ENCODE measurements at regions of chr7 and their contacts with region 1.

Region 1: GRCh38 chr7:75611548-75612178 is 119.5 kb downstream of the SPDYE5 start:
- DNase-seq: peak; percentile 86 to 97 (median 94)
- H3K4me3 ChIP-seq: peak overlapping the region in 53 of 59 donors; percentile 2 to 66 (median 38)
- H3K27ac ChIP-seq: peak overlapping the region; percentile 76 to 99 (median 93)
- H3K27me3 ChIP-seq: no peaks in the 10 kb centered on the region
- CTCF ChIP-seq: peak in 30 of 56 donors; percentile 5 to 55 (median 27)

Region 2: DNA sequence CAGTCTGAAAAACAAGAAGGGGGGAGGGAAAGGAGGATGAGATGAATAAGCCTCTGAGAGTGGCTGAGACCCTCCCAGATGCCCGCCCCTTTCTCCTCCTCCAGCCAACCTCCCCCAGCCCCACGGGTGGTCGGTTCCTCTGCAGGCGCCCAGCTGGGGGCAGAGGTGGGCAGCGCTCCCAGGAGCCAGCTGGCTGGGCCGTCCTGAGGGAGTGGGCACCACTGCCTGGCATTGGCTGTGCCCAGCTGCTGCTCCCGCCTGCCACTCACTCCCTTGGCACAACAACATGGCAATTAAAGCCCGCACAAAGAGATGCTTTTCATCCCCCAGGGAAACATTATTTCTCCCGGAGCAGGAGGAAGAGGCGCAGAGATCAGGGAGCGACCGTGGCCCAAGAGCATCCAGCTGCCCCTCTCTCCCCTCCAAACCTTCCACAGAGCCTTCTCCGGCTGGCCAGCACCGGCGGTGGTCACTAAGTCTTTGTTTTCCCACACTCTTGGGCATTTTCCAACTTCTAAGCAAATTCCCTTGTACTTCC is 12.3 kb before region 1 on chr7:
- intact Hi-C with region 1: loop called (anchors 1 kb)
- DNase-seq: peak; percentile 48 to 96 (median 94)
- H3K4me3 ChIP-seq: peak overlapping the region in 35 of 59 donors; percentile 3 to 53 (median 23)
- H3K27ac ChIP-seq: peak overlapping the region; percentile 72 to 98 (median 95)
- H3K27me3 ChIP-seq: no peaks in the 10 kb centered on the region
- CTCF ChIP-seq: peak in 27 of 56 donors; percentile 7 to 48 (median 23)

Region 3: DNA sequence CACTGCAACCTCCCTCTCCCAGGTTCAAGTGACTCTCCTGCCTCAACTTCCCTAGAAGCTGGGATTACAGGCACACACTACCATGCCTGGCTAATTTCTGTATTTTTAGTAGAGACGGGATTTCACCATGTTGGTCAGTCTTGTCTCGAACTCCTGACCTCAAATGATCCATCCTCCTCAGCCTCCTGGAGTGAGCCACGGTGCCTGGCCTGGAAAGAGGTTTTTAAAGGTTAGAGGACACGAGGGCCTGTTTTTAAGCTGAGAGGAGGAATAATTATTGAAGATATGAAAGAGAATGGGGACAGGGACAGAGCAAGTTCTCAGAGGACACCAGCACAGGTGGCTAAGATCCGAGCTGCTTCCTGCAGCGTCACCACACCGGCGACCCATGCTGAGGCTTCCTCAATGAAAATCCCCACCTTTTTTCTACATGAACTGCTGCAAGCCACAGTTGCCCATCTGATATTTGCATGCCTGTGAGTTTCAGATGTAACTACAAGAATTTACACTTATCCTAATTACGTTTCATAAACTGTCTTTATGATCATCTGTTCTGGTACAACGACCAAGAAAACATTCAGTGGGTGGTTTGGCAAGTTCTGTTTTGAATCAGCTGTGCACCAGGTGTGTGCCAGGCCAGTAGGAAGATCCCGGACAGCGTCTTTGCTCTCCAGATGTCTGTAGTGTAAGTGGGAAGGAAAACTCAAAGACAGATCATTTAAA is 51.1 kb after region 1 on chr7:
- intact Hi-C with region 1: loop called in 1 of 2 experiments (anchors 5 kb)
- DNase-seq: no peak
- H3K4me3 ChIP-seq: no peak overlapping the region
- H3K27ac ChIP-seq: peak overlapping the region in 58 of 59 donors; percentile 14 to 97 (median 89)
- H3K27me3 ChIP-seq: no peaks in the 10 kb centered on the region
- CTCF ChIP-seq: no peak

Region 4: GRCh38 chr7:75688200-75689136 is 76.8 kb after region 1 on chr7:
- intact Hi-C with region 1: loop called in 1 of 2 experiments (anchors 2 kb)
- DNase-seq: peak; percentile 33 to 96 (median 92)
- H3K4me3 ChIP-seq: peak overlapping the region in 54 of 59 donors; percentile 9 to 63 (median 36)
- H3K27ac ChIP-seq: peak overlapping the region; percentile 60 to 99 (median 93)
- H3K27me3 ChIP-seq: no peaks in the 10 kb centered on the region
- CTCF ChIP-seq: peak in 12 of 56 donors; percentile 7 to 33 (median 14)

Region 5: DNA sequence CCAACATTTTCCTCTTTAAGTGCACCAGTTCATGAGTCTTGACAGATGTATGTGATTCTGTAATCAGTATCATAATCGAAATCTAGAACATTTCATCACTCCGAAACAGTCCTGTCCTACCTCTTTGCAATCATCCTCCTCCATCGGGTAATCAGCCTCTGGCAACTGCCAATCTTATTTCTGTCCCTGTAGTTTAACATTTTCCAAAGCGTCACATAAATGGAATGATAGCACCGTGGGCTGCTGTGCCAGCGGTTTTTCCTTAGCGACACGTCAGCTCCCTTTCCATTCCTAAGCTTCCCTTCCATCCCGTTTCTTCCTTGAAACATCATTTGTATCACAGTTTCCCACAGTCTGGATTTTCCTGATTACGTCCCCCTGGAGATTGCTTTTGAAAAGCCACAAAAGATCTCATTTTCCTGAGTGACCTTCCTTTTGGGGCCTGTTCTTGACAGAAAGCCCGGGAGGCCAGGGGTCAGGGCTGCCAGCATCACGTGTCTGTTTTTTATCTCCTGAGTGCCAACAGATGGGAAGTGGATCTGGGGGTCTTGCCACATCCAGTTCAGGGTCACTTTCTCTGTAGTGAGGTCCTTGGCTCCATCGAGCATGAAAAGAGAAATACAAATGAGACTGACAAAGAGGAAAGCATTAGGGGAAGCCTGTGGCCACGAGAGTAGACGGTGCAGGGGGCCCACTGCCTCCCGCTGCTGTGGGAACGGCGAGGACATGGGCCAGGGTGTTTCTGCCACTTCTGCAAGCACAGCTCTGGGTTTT is 351.1 kb after region 1 on chr7:
- intact Hi-C with region 1: no loop called
- DNase-seq: no peak
- H3K4me3 ChIP-seq: no peak overlapping the region
- H3K27ac ChIP-seq: peak overlapping the region in 50 of 59 donors; percentile 8 to 90 (median 62)
- H3K27me3 ChIP-seq: no peaks in the 10 kb centered on the region
- CTCF ChIP-seq: no peak

Measured in dorsolateral prefrontal cortex (tissue), 120 donors.